CD8-positive, alpha-beta T cell (primary cell): ENCODE measurements at regions of chr17 and their contacts with region 1.

Region 1: DNA sequence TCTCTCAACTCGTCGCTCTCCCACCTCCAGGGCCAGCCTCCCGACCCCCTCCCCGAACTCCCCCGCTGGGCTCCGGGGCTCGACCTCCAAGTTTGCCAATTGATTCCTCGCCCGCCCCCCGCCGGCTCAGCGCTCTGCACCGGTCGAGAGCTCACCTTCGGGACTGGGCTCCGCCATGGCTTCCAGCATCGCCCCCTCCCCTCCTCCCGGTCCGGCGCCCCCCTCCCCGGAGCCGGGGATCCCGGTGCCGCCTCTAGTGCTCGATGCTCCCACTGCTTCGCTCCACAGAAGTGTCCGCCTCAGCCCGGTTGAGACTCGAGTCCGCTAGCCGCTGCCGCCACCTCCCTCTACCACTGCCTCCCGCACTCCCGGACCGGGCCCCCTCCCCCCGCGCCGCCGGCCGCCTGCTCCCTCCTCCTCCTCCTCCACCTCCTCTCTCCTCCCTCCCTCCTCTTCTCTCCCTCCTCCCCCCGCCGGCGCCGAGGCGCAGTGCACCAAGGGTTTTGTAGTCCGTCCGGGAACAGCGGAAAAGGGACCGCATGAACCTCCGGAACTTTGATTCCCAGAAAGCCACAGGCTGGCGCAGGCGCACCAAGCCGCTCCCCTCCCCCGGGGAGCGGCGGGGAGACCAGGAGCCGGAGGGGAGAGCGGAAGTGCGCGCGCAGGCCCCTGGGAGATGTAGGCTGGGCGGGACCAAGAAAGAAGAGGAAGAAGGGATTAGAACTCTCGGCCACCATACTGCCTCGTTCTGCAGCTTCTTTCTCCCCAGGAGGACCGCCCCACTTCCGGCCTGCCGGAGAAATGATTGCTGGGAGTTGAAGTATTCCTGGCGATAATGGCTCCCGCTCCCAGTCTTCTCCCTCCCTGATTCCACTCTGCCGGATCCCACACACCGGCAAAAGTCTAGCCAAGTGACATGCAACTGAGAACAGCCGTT is at the start of gene PHF23:
- DNase-seq: peak; percentile 93 to 99 (median 97)
- ATAC-seq: peak; percentile 64
- H3K4me3 ChIP-seq: peak within 1 kb of the TSS; percentile 87 to 90
- H3K4me3 Mint-ChIP-seq: peak within 1 kb of the TSS; percentile 98
- H3K27ac ChIP-seq: peak within 1 kb of the TSS; percentile 64 to 100
- H3K27ac Mint-ChIP-seq: peak within 1 kb of the TSS; percentile 90
- H3K4me1 ChIP-seq: peaks cover 37% of the 10 kb centered on the region
- H3K4me1 Mint-ChIP-seq: peaks cover 58% of the 10 kb centered on the region
- H3K27me3 ChIP-seq: no peaks in the 10 kb centered on the region
- H3K27me3 Mint-ChIP-seq: no peaks in the 10 kb centered on the region
- CTCF ChIP-seq: no peak
- total RNA-seq, gene PHF23: 2.8 to 3.1 TPM

Region 2: GRCh38 chr17:7204828-7205461 is 34.4 kb before region 1 on chr17:
- CTCF ChIA-PET with region 1: interaction called, 3 read pairs
- POLR2A ChIA-PET with region 1: no interaction called
- intact Hi-C with region 1: loop called (anchors 1 kb)
- DNase-seq: peak; percentile 87 to 100 (median 96)
- ATAC-seq: peak; percentile 84
- H3K4me3 ChIP-seq: peak overlapping the region; percentile 55 to 73
- H3K4me3 Mint-ChIP-seq: peak overlapping the region; percentile 87
- H3K27ac ChIP-seq: peak overlapping the region; percentile 90
- H3K27ac Mint-ChIP-seq: peak overlapping the region; percentile 91
- H3K4me1 ChIP-seq: peaks cover 20% of the 10 kb centered on the region
- H3K4me1 Mint-ChIP-seq: peaks cover 29% of the 10 kb centered on the region
- H3K27me3 ChIP-seq: no peaks in the 10 kb centered on the region
- H3K27me3 Mint-ChIP-seq: no peaks in the 10 kb centered on the region
- CTCF ChIP-seq: no peak

Region 3: GRCh38 chr17:7219812-7220581 is 19.4 kb before region 1 on chr17 and contains the starts of genes ACADVL and DLG4:
- CTCF ChIA-PET with region 1: interaction called, 24 read pairs
- POLR2A ChIA-PET with region 1: interaction called, 26 read pairs
- intact Hi-C with region 1: loop called (anchors 1 kb)
- DNase-seq: peak in 8 of 9 experiments; percentile 67 to 86 (median 82)
- ATAC-seq: peak; percentile 54
- H3K4me3 ChIP-seq: peak within 1 kb of the TSS; percentile 74 to 97
- H3K4me3 Mint-ChIP-seq: peak within 1 kb of the TSS; percentile 91
- H3K27ac ChIP-seq: peak within 1 kb of the TSS; percentile 35 to 86
- H3K27ac Mint-ChIP-seq: peak within 1 kb of the TSS; percentile 94
- H3K4me1 ChIP-seq: peaks cover 52% of the 10 kb centered on the region
- H3K4me1 Mint-ChIP-seq: peaks cover 55% of the 10 kb centered on the region
- H3K27me3 ChIP-seq: no peaks in the 10 kb centered on the region
- H3K27me3 Mint-ChIP-seq: no peaks in the 10 kb centered on the region
- CTCF ChIP-seq: no peak
- total RNA-seq, gene ACADVL: 264 to 275 TPM
- total RNA-seq, gene DLG4: 5.8 to 8.1 TPM

Region 4: DNA sequence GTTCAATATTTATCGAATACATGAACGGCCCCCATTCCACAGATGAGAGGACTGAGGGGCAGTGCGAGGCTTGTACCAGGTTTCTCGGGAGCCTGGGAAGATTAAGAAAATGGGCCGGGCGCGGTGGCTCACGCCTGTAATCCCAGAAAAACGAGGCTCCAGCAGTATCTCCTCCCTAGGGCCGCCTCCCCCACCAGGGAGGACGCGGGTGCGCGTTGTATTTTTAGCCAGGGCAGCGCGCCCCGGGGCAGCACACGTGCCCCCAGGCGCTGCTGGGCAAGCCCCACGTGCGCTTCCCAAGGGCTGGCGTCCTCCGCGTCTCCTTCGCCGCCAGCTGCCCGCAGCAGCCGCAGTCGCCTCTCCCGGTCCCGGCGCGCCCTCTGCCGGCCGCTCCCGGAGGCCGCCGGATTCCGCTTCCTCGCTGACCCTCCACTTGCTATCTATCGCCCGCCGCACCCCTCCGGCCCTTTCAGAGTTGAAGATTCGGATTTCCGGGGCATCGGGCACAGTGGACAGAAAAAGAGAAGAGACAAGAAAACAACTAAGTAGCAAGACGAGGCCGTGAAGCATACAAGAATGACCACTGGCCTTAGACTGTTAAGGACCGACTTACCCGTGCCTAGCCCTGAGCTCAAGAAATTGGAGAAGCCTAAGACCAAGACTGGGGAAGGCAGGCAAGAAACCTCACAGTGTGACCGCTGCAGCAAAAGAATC is 57.0 kb after region 1 on chr17:
- CTCF ChIA-PET with region 1: interaction called, 18 read pairs
- POLR2A ChIA-PET with region 1: no interaction called
- intact Hi-C with region 1: no loop called
- DNase-seq: peak in 7 of 9 experiments; percentile 54 to 82 (median 75)
- ATAC-seq: no peak
- H3K4me3 ChIP-seq: no peak overlapping the region
- H3K4me3 Mint-ChIP-seq: peak overlapping the region; percentile 75
- H3K27ac ChIP-seq: no peak overlapping the region
- H3K27ac Mint-ChIP-seq: no peak overlapping the region
- H3K4me1 ChIP-seq: peaks cover 25% of the 10 kb centered on the region
- H3K4me1 Mint-ChIP-seq: peaks cover 19% of the 10 kb centered on the region
- H3K27me3 ChIP-seq: peaks cover 0 to 15% of the 10 kb centered on the region in 2 experiments
- H3K27me3 Mint-ChIP-seq: peaks cover 9% of the 10 kb centered on the region
- CTCF ChIP-seq: peak; percentile 89

Region 5: DNA sequence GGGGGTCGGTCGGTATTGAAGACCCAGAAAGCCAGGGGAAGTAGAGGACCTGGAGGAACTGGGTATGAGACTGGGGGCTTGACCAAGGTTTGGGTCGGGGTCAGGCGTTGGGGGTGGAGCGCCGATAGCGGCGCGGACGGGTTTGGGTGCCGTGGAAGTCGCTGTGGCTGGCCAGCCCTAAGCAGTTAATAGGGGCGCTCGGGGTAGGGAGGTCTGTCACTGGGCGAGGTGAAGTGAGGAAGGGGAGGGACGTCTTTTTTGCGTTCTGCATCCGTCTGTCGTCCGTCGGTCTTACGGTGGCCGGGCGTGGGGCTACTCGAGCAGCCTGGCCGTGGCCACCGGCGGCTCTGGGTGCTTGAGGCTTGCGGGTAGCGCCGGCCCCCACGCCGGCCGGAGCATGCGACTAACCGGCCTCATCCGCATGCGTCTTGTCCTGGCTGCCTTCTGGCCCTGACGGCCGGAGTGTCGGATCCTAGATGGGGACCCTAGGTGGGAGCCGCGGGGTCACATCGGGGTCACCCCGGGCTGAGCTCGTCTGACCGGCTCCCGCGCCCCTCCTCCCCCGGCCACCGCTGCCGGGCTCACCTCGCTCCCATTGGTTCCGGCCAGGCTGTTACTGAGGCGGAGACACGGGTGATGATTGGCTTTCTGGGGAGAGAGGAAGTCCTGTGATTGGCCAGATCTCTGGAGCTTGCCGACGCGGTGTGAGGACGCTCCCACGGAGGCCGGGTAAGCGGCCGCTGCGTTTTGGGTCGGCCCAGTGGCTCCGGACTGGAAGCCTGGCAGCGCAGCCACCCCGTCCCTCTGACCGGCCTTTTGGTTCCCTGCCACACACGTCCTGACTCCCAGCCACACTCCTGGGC is 605.2 kb after region 1 on chr17:
- CTCF ChIA-PET with region 1: no interaction called
- POLR2A ChIA-PET with region 1: no interaction called
- intact Hi-C with region 1: loop called (anchors 5 to 10 kb)
- DNase-seq: peak; percentile 67 to 94 (median 79)
- ATAC-seq: peak; percentile 8
- H3K4me3 ChIP-seq: peak overlapping the region; percentile 94 to 98
- H3K4me3 Mint-ChIP-seq: peak overlapping the region; percentile 91
- H3K27ac ChIP-seq: peak overlapping the region; percentile 98 to 100
- H3K27ac Mint-ChIP-seq: peak overlapping the region; percentile 99
- H3K4me1 ChIP-seq: peaks cover 39% of the 10 kb centered on the region
- H3K4me1 Mint-ChIP-seq: peaks cover 33% of the 10 kb centered on the region
- H3K27me3 ChIP-seq: no peaks in the 10 kb centered on the region
- H3K27me3 Mint-ChIP-seq: no peaks in the 10 kb centered on the region
- CTCF ChIP-seq: no peak